ENCODE measurements at regions of chrX and their contacts with region 1.

Region 1: DNA sequence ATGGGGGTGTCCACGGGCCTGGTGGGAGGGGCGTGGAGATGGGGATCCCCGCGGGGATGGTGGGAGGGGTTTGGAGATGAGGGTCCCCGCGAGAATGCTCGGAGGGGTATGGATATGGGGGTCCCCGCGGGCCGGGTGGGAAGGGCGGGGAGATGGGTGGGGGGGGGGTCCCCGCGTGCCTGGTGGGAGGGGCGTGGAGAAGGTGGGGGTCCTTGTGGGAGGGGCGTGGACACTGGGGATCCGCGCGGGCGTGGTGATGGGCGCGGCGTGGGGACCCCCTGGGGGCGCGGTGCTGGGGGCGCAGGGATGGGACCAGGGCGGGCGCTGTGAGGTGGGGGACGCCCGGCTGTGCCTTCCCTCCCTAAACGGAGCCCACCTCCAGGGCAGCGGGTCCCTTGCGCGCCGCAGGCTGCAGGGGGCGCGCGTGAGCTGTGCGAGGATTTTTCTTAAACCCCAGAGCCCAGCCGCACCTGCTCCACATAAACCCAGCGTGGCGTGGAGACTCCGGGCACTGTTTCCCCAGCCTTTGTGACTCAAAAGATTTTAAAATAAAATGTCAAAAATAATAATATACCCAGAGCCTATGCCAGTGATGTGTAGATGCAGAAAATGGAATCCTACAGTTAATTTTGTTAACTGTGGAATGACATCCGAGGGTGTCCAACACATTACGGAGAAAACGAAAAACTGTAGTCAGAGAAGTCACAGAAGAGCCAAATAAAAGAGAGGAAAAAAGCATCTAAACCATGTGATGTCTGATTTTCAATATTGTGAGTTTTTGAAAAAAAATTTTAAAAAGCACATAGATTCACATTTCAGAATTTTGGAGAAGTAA is 1.5 kb upstream of the ASMTL start:
- DNase-seq: no peak
- ATAC-seq: peak; percentile 70
- H3K4me3 ChIP-seq: peak overlapping the region; percentile 32; the same call in 1 of the 2 replicates
- H3K27ac ChIP-seq: peak overlapping the region; percentile 42
- H3K4me1 ChIP-seq: peaks cover 4% of the 10 kb centered on the region
- H3K27me3 ChIP-seq: no peaks in the 10 kb centered on the region
- CTCF ChIP-seq: peak; percentile 92 to 98 (median 98); a peak in 5 of 6 replicates
- EP300 ChIP-seq: no peak
- POLR2A ChIP-seq: no peak
- RAD21 ChIP-seq: peak; percentile 95

Region 2: DNA sequence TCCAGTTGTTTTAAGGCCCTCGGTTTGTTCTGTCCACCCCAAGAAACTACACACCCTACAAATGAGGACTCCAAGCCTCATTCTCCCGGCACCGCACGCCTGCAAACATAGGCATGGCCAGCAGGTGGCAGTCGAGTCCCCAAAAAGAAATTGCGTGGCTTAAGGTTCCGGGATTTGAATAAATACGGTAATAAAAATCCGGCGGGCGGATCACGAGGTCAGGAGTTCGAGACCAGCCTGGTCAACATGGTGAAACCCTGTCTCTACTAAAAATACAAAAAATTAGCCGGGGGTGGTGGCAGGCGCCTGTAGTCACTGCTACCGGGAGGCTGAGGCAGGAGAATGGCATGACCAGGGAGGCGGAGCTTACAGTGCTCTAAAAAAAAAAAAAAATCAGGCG is 207.4 kb before region 1 on chrX:
- CTCF ChIA-PET with region 1: no interaction called
- POLR2A ChIA-PET with region 1: no interaction called
- RAD21 ChIA-PET with region 1: no interaction called
- SMC1A ChIA-PET with region 1: no interaction called
- in situ Hi-C with region 1: no loop called
- intact Hi-C with region 1: loop called (anchors 2 kb)
- DNase-seq: peak; percentile 57
- ATAC-seq: peak; percentile 64
- H3K4me3 ChIP-seq: no peak overlapping the region
- H3K27ac ChIP-seq: no peak overlapping the region
- H3K4me1 ChIP-seq: peaks cover 14% of the 10 kb centered on the region
- H3K27me3 ChIP-seq: no peaks in the 10 kb centered on the region
- CTCF ChIP-seq: peak; percentile 81 to 86 (median 85)
- EP300 ChIP-seq: no peak
- POLR2A ChIP-seq: no peak
- RAD21 ChIP-seq: peak; percentile 96

Region 3: DNA sequence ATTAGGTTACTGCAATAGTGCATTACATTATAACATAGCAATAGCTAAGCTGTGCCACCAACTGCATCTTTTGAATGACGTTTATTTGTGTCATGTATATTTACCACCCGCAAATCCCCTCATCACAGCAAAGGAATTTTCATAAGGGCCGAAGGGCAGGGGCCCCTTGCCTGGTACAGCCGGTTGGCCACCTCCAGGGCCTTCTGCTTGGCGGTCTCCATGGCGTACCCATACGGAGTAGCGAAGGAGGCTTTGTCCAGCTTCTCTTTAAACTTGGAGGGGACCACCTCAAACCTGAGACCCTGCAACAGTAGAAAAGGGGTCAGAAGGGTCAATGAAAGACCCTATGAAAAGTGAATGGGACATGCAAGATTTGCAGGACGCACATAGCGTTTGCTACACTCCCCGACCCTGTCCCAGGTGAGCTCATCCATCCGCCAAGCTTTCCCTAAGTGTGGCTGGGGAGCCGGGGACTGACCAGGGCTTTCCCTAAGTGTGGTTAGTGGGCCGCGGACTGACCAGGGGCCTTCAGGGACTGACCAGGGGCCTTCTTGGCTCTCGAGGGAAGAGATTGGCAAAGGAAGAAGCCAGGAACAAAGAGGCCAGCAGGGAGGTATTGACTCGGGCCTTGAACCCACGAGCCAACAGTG is 12.0 kb before region 1 on chrX:
- CTCF ChIA-PET with region 1: no interaction called
- POLR2A ChIA-PET with region 1: no interaction called
- RAD21 ChIA-PET with region 1: no interaction called
- SMC1A ChIA-PET with region 1: no interaction called
- in situ Hi-C with region 1: no loop called
- intact Hi-C with region 1: no loop called
- DNase-seq: no peak
- ATAC-seq: no peak
- H3K4me3 ChIP-seq: no peak overlapping the region
- H3K27ac ChIP-seq: no peak overlapping the region
- H3K4me1 ChIP-seq: peaks cover 1% of the 10 kb centered on the region
- H3K27me3 ChIP-seq: no peaks in the 10 kb centered on the region
- CTCF ChIP-seq: no peak
- EP300 ChIP-seq: no peak
- POLR2A ChIP-seq: no peak
- RAD21 ChIP-seq: no peak

Region 4: GRCh38 chrX:1481636-1482529 is 27.7 kb after region 1 on chrX:
- CTCF ChIA-PET with region 1: no interaction called
- POLR2A ChIA-PET with region 1: no interaction called
- RAD21 ChIA-PET with region 1: no interaction called
- SMC1A ChIA-PET with region 1: no interaction called
- in situ Hi-C with region 1: no loop called
- intact Hi-C with region 1: loop called (anchors 1 kb)
- DNase-seq: peak; percentile 90
- ATAC-seq: peak; percentile 76
- H3K4me3 ChIP-seq: peak overlapping the region; percentile 68
- H3K27ac ChIP-seq: peak overlapping the region; percentile 96
- H3K4me1 ChIP-seq: peaks cover 59% of the 10 kb centered on the region
- H3K27me3 ChIP-seq: no peaks in the 10 kb centered on the region
- CTCF ChIP-seq: peak; percentile 14 to 20 (median 17); a peak in 1 of 6 replicates
- EP300 ChIP-seq: peak; percentile 78 to 88; a peak in 2 of 4 replicates
- POLR2A ChIP-seq: peak; percentile 77
- RAD21 ChIP-seq: peak; percentile 36; the same call in 1 of the 2 replicates

Region 5: GRCh38 chrX:1649621-1650020 is 195.5 kb after region 1 on chrX:
- CTCF ChIA-PET with region 1: no interaction called
- POLR2A ChIA-PET with region 1: no interaction called
- RAD21 ChIA-PET with region 1: no interaction called
- SMC1A ChIA-PET with region 1: no interaction called
- in situ Hi-C with region 1: no loop called
- intact Hi-C with region 1: loop called (anchors 1 kb)
- DNase-seq: no peak
- ATAC-seq: no peak
- H3K4me3 ChIP-seq: no peak overlapping the region
- H3K27ac ChIP-seq: no peak overlapping the region
- H3K4me1 ChIP-seq: no peaks in the 10 kb centered on the region
- H3K27me3 ChIP-seq: no peaks in the 10 kb centered on the region
- CTCF ChIP-seq: no peak
- EP300 ChIP-seq: no peak
- POLR2A ChIP-seq: no peak
- RAD21 ChIP-seq: no peak

Region 6: DNA sequence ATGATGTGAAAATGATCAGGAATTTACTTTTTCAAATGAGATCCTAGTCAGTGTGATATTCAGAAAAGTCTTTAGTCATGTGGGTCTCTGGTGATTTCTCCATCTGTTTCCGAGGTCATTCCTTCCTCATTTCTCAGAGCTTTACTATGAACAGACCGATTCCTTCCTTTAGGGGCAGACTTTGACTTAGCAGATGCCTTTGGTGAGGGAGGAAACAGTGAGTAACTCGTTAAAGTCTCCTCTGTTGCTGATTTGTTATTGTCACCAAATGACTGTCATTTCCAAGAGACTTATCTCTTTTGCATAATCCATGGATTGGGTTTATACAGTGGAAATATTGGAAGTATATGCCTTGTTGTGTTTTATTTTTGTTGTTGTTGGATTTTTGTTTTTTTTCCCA is 1160.7 kb after region 1 on chrX:
- CTCF ChIA-PET with region 1: no interaction called
- POLR2A ChIA-PET with region 1: no interaction called
- RAD21 ChIA-PET with region 1: no interaction called
- SMC1A ChIA-PET with region 1: no interaction called
- in situ Hi-C with region 1: loop called (anchors 10 kb)
- intact Hi-C with region 1: loop called (anchors 10 kb)
- DNase-seq: no peak
- ATAC-seq: peak; percentile 71
- H3K4me3 ChIP-seq: no peak overlapping the region
- H3K27ac ChIP-seq: no peak overlapping the region
- H3K4me1 ChIP-seq: no peaks in the 10 kb centered on the region; the same call in 1 of the 2 replicates
- H3K27me3 ChIP-seq: no peaks in the 10 kb centered on the region
- CTCF ChIP-seq: peak in 1 of 3 experiments; percentile 7; a peak in 2 of 6 replicates
- EP300 ChIP-seq: no peak
- POLR2A ChIP-seq: no peak
- RAD21 ChIP-seq: no peak

Measured in GM12878 (cell line).